Body of pancreas (tissue), 4 donors: ENCODE measurements at regions of chr21 and their contacts with region 1.

Region 1: DNA sequence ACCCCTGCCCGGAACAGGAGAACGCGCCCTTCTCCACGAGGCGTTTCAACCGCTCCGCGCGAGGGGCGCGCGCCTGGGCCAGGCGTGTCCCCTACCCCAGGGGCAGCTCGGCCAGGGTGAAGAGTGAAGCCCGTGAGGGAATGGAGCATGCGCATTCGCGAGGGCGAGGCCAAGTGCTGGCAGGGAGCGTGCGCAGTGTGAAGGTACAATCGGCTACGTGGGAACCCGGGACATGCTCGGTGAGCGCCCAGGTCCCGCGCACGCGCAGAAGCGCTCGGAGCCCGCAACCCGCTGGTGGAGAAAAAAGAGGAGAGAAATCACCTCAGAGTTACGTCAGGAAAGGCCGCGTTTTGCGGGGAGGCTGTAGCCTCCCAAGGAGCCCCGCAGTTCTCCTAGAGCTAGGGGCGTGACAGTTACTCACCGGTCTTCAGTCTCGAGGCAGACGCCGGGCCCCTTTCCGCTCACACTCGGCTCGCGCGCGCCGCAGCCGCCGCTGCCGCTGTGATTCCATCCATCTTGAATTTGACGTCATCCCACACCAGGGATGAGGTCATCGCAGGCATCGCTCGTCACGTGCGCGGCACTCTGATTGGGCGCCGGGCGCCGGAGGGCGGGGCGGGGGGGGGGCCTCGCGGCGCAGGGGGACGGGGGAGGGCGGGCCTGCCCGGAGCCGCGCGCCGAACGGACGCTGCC is at the start of gene ZBTB21:
- DNase-seq: peak; percentile 99
- ATAC-seq: peak; percentile 91
- H3K4me3 ChIP-seq: peak within 1 kb of the TSS; percentile 56 to 62
- H3K27ac ChIP-seq: peak within 1 kb of the TSS; percentile 98 to 99 (median 98)
- H3K4me1 ChIP-seq: peaks cover 14% of the 10 kb centered on the region
- H3K27me3 ChIP-seq: no peaks in the 10 kb centered on the region
- CTCF ChIP-seq: no peak
- POLR2A ChIP-seq: peak; percentile 93 to 96 (median 94)
- total RNA-seq, gene ZBTB21: 4.2 to 10.2 TPM

Region 2: GRCh38 chr21:41847066-41847804 is 162.7 kb before region 1 on chr21:
- intact Hi-C with region 1: no loop called
- DNase-seq: no peak
- ATAC-seq: no peak
- H3K4me3 ChIP-seq: no peak overlapping the region
- H3K27ac ChIP-seq: no peak overlapping the region
- H3K4me1 ChIP-seq: no peaks in the 10 kb centered on the region
- H3K27me3 ChIP-seq: no peaks in the 10 kb centered on the region
- CTCF ChIP-seq: no peak
- POLR2A ChIP-seq: no peak

Region 3: GRCh38 chr21:41953831-41954653 is 55.9 kb before region 1 on chr21 and contains the start of gene C2CD2:
- intact Hi-C with region 1: loop called (anchors 10 kb)
- DNase-seq: peak; percentile 65 to 74 (median 67)
- ATAC-seq: peak; percentile 84
- H3K4me3 ChIP-seq: peak within 1 kb of the TSS; percentile 65 to 88
- H3K27ac ChIP-seq: peak within 1 kb of the TSS; percentile 25 to 72 (median 62)
- H3K4me1 ChIP-seq: peaks cover 33% of the 10 kb centered on the region
- H3K27me3 ChIP-seq: no peaks in the 10 kb centered on the region
- CTCF ChIP-seq: peak in 1 of 7 experiments; percentile 2
- POLR2A ChIP-seq: peak in 1 of 3 donors; percentile 5
- total RNA-seq, gene C2CD2: 10.4 to 25.4 TPM

Region 4: DNA sequence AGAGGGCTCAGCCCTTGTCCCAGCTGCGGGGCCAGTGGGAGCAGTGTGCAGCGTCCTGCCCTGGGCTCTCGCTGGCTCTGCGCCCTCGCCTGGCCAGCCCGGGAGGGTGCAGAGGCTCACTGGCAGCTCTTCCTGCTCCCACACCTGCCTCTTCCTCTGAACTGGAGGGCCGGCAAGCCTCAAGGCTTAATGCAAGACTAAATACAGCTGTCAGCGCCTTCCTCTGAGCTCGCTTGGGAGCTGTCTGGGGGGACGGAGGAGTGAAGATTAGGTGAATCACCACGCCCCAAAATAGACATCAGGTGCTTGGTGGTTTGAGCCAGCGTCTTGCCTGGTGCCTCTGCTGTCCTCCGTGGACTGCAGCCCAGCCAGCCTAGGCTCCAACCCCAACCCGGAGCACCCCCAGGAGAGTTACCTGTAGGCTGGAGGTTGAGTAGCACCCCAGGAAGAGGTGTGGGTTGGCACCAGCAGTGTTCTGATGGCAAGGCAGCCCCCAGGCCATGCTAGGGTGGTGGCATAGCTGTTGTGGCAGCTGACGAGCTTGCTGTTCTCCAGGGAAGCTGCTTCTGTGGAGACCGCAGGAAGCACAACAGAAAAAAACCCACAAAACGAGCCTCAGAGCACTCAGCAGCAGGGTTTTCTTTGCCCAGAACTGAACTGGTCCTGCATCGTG is 98.0 kb after region 1 on chr21:
- intact Hi-C with region 1: loop called (anchors 10 kb)
- DNase-seq: peak; percentile 63 to 87 (median 75)
- ATAC-seq: peak; percentile 80
- H3K4me3 ChIP-seq: no peak overlapping the region
- H3K27ac ChIP-seq: no peak overlapping the region
- H3K4me1 ChIP-seq: peaks cover 12% of the 10 kb centered on the region
- H3K27me3 ChIP-seq: no peaks in the 10 kb centered on the region
- CTCF ChIP-seq: peak; percentile 53 to 90 (median 68)
- POLR2A ChIP-seq: no peak